RWPE1 (cell line): ENCODE measurements at regions of chr9 and their contacts with region 1.

Region 1: DNA sequence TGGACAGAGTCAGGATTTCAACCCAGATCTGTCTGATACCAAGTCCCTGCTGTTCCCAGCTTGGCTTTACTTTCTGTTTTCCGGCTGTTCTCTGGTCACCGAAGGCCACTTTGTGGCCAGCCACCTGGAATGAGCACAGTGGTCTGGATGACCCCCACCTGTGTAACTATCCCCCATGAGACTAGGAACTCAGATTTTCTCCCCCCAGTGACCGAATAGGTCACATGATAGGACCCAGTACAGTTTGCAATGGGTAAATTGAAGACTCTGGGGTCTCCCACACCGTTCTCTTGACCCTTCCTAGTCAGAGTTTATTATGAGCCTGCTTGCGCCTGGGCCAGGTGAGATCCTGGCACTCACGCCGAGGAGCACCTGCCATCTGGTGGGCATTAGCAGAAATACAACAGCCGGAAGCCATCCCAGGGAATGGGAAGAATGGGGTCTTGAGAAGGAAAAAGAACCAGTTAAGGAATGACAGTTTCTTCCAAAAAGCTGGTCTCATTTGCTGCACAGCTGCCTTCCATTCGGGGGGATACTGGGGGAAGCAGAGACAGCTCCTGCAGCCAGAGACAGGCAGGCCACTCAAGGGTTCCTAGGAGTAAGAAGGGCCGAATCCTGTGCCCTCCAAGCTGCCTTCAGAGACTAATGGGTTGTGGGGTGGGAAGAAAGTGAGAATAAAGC is 7.1 kb downstream of the PHYHD1 start:
- DNase-seq: peak; percentile 89
- H3K27ac ChIP-seq: peak overlapping the region; percentile 58
- CTCF ChIP-seq: peak; percentile 99

Region 2: DNA sequence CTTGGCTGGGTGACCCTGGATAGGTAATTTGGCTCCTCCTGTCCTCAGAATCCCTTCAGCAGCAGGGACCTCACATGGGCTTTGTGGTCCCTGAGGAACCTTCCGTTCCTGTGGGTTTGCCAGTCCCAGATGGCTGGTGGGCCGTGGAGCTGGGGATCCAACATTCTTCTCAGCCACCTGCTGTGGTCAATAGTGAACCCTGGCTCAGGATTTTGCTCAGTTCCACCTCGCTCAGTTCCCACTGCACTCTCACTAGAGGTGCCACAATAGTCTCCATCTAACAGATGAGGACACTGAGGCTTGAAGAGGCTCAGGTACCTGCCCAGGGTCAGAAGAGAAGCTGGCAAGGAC is 81.2 kb before region 1 on chr9:
- CTCF ChIA-PET with region 1: interaction called, 12 read pairs
- POLR2A ChIA-PET with region 1: no interaction called
- DNase-seq: no peak
- H3K27ac ChIP-seq: no peak overlapping the region
- CTCF ChIP-seq: no peak

Region 3: GRCh38 chr9:128863647-128864046 is 64.2 kb before region 1 on chr9:
- CTCF ChIA-PET with region 1: interaction called, 26 read pairs
- POLR2A ChIA-PET with region 1: interaction called, 4 read pairs
- DNase-seq: peak; percentile 85
- H3K27ac ChIP-seq: peak overlapping the region; percentile 51
- CTCF ChIP-seq: peak; percentile 99

Region 4: DNA sequence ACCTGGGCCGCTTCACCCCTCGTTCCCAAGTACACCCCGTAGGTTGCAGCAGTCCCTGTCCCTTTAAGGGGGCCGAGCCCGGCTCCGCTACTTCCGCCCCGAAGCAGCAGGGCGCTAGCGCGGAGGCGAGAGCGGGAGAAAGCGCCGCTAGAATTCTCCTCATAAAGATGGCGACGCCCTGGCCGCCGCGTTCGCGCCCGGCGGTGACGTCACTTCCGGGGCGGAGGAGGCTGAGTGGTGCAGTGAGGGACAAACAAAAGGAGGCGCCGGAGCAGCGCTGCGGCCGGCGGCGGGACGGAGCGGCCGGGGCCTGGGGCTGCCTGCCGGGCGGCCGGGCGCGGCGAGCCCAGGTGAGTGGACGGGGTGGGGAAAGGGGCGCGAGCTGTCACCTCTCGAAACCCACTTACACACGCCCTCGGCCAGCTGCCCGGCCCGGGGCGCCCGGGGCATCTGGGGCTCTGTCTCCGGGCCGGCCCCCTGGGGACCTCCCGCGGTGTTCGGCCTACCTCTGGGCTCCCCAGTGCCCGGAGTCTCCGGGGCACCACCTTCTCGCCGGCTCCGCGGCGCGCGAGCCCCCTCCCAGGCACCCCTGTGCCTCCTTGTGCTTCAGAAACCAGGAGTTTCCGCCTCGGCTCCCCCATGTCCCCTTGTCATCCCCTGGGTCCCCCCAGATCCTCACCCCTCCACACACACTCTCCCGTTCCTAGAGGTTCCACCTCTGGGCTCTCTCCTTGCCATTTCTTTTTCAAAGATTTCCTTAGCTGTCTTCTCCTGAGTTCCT is 45.8 kb before region 1 on chr9 and contains the starts of genes KYAT1 and LRRC8A:
- CTCF ChIA-PET with region 1: interaction called, 10 read pairs
- POLR2A ChIA-PET with region 1: interaction called, 7 read pairs
- DNase-seq: peak; percentile 98
- H3K27ac ChIP-seq: peak within 1 kb of the TSS; percentile 100
- CTCF ChIP-seq: no peak